Brain microvascular endothelial cell (primary cell): ENCODE measurements at regions of chr1 and their contacts with region 1.

Region 1: DNA sequence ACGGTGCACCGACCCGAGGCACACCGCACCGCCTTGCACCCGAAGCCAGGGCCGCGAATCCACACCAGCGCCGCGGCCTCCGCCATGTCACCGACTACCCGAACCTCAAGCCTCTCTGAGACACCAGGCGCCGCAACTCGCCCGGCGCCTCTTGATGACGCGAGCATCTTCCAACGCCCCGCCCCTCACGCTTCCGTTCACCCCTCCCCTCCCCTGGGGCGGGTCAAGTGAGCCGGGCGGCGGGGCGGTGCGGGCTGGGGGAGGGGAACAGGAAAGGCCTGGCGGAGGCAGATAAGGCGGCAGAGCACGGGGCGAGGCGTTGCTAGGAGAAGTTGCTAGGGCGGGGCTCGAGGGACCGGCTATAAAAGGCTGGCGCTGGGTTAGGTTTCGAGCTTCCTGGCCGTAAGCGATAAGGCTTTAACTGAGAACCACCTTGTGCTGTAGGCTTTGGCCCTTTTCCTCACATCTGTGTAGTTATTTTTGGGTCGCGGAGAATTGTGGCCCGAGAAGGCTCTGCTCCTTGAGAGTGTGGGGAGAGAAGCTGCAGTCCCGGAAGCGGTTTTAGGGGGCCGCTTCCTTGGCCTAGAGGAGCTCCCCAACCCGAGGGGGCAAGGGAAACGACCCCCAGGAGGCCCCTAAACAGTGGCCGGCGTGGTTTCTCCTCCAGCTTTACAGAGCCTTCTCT is at the start of gene SDE2:
- DNase-seq: peak; percentile 99
- H3K4me3 ChIP-seq: peak within 1 kb of the TSS; percentile 95
- H3K27ac ChIP-seq: peak within 1 kb of the TSS; percentile 94
- H3K27me3 ChIP-seq: no peaks in the 10 kb centered on the region
- CTCF ChIP-seq: no peak

Region 2: GRCh38 chr1:225474986-225475820 is 524.2 kb before region 1 on chr1:
- in situ Hi-C with region 1: loop called (anchors 25 kb)
- DNase-seq: peak; percentile 39
- H3K4me3 ChIP-seq: peak overlapping the region; percentile 24
- H3K27ac ChIP-seq: no peak overlapping the region
- H3K27me3 ChIP-seq: no peaks in the 10 kb centered on the region
- CTCF ChIP-seq: peak; percentile 88

Region 3: DNA sequence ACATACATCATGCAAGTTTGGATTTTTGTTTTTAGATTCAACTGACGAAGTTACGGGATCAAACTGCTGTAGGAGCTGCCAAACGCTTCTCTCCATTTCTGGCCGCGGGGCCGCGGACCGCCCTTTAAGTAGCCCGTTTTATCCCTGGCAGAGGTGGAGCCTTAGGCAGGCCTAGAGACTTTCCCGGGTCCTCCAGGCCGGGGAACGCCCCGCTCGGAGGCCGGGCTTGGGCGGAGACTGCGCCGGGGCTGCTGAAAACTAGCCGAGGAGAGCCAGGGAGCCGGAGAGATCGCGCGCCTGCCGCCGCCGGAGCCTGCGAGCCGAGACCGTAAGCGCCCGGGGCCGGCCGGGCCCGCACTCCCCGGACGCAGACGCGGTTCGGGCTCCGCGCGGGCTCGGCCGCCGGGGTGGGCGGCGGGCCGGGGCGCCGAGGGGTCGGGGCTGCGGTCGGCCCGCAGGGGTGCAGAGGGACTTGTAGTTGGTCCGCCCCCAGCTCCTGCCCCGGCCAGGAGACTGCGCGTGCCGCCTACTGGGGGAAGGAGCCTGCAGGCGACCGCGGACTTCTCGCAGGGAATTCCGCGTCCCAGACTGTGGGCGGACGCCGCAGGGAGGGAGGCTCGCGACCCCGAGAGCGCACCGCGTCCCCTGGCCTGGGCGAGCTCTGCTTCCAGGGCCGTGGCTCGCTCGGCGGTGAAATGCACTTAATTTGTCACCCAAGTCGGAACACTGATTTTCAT is 189.4 kb before region 1 on chr1 and contains the start of gene EPHX1:
- in situ Hi-C with region 1: loop called (anchors 25 kb)
- DNase-seq: peak; percentile 85
- H3K4me3 ChIP-seq: peak within 1 kb of the TSS; percentile 69
- H3K27ac ChIP-seq: peak within 1 kb of the TSS; percentile 4
- H3K27me3 ChIP-seq: no peaks in the 10 kb centered on the region
- CTCF ChIP-seq: peak; percentile 58